Vagina (tissue), 2 donors: ENCODE measurements at regions of chr2 and their contacts with region 1.

Region 1: DNA sequence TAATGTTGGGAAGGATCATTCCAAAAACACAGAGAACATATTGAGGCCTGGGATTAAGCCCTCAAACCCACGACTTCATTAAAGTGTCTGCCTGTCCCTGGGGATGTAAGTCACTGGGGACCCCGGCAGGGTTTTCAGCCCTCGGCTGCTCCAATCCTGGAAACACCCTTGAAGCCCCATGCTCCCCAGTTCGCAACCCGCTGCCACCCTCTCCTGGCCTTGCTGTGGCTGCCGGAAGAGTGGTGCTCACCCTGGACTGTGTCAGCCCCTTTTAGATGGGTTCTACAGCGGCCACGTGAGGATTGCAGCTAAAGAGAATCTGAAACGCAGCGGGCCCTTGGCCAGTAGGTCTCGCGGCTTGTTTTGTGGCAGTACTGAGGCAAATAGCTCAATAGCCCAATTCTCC is 80.0 kb downstream of the EPAS1 start:
- DNase-seq: peak in 1 of 2 donors; percentile 82
- H3K4me3 ChIP-seq: no peak overlapping the region
- H3K27ac ChIP-seq: peak overlapping the region; percentile 7
- H3K4me1 ChIP-seq: peaks cover 33% of the 10 kb centered on the region
- H3K27me3 ChIP-seq: no peaks in the 10 kb centered on the region
- CTCF ChIP-seq: no peak
- POLR2A ChIP-seq: no peak

Region 2: GRCh38 chr2:45843136-45843535 is 534.0 kb before region 1 on chr2:
- intact Hi-C with region 1: no loop called
- DNase-seq: no peak
- H3K4me3 ChIP-seq: no peak overlapping the region
- H3K27ac ChIP-seq: no peak overlapping the region
- H3K4me1 ChIP-seq: peaks cover 45% of the 10 kb centered on the region
- H3K27me3 ChIP-seq: no peaks in the 10 kb centered on the region
- CTCF ChIP-seq: no peak
- POLR2A ChIP-seq: no peak

Region 3: DNA sequence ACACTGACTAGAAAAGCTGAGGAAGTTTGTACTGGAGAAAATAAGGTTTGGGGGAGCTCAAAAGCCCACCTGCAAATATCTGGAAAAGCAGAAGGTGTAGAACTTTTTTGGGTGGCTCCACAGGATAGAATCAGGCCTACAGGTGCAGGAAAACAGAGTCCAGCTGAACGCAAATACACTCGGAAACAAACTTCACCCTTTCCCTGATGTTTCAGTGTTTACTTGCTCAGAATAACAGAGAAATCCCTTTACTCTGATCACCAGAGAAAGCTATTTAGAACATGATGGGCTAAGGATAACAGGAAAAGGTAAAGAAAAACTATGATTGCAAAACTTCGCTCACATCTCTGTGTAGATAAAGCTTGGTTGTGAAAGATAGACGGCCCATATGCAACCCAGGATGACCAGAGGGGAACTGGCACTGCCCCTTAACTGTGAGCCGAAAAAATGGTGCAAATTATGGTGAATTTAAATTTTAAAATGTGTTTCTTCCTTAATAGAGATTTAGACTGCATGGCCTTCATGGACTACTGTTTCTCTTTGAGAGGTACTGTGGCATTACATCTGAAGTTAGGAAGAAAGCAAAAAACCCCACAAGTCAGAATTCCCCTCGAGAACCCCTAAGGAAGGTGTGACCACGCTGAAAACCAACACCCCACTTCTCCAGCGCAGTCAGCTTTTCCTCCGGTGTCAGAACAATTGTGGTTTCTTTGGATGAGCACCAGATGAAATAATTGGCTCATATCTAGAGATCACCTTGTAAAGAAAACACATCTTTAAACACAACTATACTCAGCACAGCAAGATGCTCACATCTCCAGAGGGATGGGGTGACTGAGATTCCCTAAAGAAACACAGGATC is 17.7 kb after region 1 on chr2:
- intact Hi-C with region 1: no loop called
- DNase-seq: no peak
- H3K4me3 ChIP-seq: no peak overlapping the region
- H3K27ac ChIP-seq: no peak overlapping the region
- H3K4me1 ChIP-seq: no peaks in the 10 kb centered on the region
- H3K27me3 ChIP-seq: no peaks in the 10 kb centered on the region
- CTCF ChIP-seq: no peak
- POLR2A ChIP-seq: no peak

Region 4: DNA sequence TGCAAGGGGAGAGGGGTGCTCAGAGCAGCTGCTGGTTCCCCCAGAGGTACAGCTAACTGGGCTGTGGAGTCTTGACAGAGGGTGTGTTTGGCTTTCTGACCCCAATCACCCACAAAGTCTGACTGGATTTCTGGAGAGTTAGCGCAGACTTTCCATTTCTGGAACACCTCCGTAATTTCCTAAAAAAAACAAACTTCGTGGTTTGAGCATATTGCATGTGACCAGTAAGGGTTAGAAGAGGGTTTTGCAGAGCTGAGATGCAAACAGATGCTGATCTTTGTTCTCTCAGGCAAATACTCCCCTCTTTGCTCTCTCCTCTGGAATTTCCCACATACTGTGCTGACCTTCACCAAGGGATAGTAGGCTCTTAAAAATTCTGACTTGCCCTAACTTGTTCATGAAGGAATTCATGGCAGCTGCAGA is 57.7 kb after region 1 on chr2:
- intact Hi-C with region 1: no loop called
- DNase-seq: no peak
- H3K4me3 ChIP-seq: no peak overlapping the region
- H3K27ac ChIP-seq: no peak overlapping the region
- H3K4me1 ChIP-seq: peaks cover 6% of the 10 kb centered on the region
- H3K27me3 ChIP-seq: no peaks in the 10 kb centered on the region
- CTCF ChIP-seq: no peak
- POLR2A ChIP-seq: no peak

Region 5: GRCh38 chr2:46451131-46451711 is 74.0 kb after region 1 on chr2:
- intact Hi-C with region 1: loop called (anchors 10 kb)
- DNase-seq: peak in 1 of 2 donors; percentile 34
- H3K4me3 ChIP-seq: no peak overlapping the region
- H3K27ac ChIP-seq: no peak overlapping the region
- H3K4me1 ChIP-seq: no peaks in the 10 kb centered on the region
- H3K27me3 ChIP-seq: no peaks in the 10 kb centered on the region
- CTCF ChIP-seq: no peak
- POLR2A ChIP-seq: no peak